Activated CD4-positive, alpha-beta T cell treated with anti-CD3 and anti-CD28 coated beads, Interleukin-2, amount 10 ng/mL, durations not matched to agents 24 days and 14 days (primary cell): ENCODE measurements at regions of chr9 and their contacts with region 1.

Region 1: DNA sequence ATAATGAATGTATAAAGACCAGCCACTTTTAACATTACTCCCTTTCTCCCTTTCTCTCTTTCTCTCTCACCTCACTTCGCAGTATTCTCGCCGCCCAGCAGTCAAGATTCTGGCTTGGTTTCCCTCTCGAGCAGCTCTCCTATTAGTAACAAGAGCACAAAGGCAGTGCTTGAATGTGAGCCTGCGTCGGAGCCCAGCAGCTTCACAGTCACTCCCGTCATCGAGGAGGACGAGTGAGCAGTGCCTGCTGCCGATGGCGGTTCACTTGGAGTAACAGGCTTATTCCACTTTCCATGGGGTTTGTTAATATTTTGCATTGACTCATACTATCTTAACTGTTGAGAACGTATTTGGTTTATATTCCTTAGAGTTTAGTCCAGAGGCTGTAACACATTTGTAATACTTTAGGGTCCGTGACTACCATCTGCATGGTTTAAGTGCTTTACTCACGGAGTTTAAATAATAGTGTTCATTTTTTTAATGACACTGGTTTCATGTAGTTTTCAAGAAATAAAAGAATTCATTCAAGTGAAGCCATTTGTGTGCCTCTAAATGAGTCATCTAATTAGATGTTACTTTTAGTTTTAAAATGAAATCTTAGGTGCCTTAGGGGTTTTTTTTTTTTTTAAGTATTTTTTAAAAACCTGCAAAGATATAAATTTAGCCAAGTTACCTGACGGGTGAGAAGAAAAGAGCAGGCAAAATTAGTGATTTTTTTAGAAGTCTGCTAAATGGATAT is 8.4 kb upstream of the DMRT3 start:
- DNase-seq: no peak
- H3K4me3 Mint-ChIP-seq: no peak overlapping the region
- H3K27ac Mint-ChIP-seq: no peak overlapping the region
- H3K4me1 Mint-ChIP-seq: peaks cover 5% of the 10 kb centered on the region
- H3K27me3 Mint-ChIP-seq: peaks cover 75% of the 10 kb centered on the region

Region 2: DNA sequence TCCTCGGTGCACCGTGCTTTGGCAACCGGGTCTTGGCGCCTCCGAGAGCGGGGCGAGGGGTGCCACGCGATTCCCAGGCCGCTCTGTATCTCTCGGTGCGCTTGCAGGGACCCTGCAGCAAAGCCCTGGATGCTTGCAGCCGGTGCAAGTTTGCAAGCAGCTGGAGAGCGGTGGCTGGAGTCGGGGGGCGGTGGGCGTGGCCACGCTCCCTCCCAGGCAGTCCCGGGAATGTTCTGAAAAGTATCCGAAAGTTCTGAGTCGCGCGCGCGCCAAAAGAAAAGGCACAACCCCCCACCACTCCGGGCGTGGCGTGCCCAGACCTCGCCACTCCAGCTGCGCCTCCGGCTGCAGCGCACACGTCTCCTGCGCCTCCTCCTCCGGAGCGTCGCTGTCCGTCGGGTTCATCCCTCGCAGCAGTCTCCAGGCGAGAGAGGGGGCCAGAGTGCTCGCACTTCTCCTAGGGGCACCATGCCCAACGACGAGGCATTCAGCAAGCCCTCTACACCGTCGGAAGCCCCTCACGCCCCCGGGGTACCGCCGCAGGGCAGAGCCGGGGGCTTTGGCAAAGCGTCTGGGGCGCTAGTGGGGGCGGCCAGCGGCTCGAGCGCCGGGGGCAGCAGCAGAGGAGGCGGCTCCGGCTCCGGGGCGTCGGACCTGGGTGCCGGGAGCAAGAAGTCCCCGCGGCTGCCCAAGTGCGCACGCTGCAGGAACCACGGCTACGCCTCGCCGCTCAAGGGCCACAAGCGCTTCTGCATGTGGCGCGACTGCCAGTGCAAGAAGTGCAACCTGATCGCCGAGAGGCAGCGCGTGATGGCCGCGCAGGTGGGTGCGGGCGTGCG is 126.5 kb before region 1 on chr9 and contains the start of gene DMRT1:
- intact Hi-C with region 1: loop called (anchors 2 kb)
- DNase-seq: no peak
- H3K4me3 Mint-ChIP-seq: no peak within 1 kb of the TSS
- H3K27ac Mint-ChIP-seq: no peak within 1 kb of the TSS
- H3K4me1 Mint-ChIP-seq: peaks cover 2% of the 10 kb centered on the region
- H3K27me3 Mint-ChIP-seq: peaks cover 41% of the 10 kb centered on the region
- total RNA-seq, gene DMRT1: not detected in 2 replicates

Region 3: GRCh38 chr9:893843-894420 is 74.1 kb before region 1 on chr9:
- intact Hi-C with region 1: loop called (anchors 5 kb)
- DNase-seq: peak; percentile 83
- H3K4me3 Mint-ChIP-seq: no peak overlapping the region
- H3K27ac Mint-ChIP-seq: no peak overlapping the region
- H3K4me1 Mint-ChIP-seq: peaks cover 7% of the 10 kb centered on the region
- H3K27me3 Mint-ChIP-seq: peaks cover 15% of the 10 kb centered on the region

Region 4: DNA sequence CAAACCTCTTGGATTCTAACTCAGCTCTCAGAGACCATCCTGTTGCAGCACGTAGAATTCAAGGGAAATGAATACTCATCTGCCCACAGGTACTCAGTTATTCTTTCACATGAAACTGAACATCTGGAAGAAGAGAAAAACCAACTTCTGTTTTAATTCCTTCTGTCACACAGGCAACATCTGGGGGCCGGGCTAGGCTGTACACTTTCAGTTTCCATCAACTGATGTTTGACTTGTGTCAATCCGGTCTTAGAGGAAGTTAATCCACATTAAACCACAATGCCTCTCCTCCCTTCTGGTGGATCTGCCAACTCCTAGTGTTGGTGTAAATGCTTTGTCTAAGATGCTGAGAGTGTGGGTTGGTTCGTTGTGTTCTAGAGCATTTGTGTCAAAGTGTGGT is 25.9 kb after region 1 on chr9:
- intact Hi-C with region 1: no loop called
- DNase-seq: peak; percentile 63
- H3K4me3 Mint-ChIP-seq: no peak overlapping the region
- H3K27ac Mint-ChIP-seq: no peak overlapping the region
- H3K4me1 Mint-ChIP-seq: peaks cover 5% of the 10 kb centered on the region
- H3K27me3 Mint-ChIP-seq: peaks cover 10% of the 10 kb centered on the region